ENCODE measurements at regions of chr12 and their contacts with region 1.

Region 1: GRCh38 chr12:106136263-106136662 is 2.5 kb downstream of the NUAK1 start:
- DNase-seq: peak; percentile 26 to 75 (median 54)
- ATAC-seq: peak; percentile 36
- H3K4me3 ChIP-seq: no peak overlapping the region
- H3K4me3 Mint-ChIP-seq: peak overlapping the region in 4 of 10 donors; percentile 1 to 68 (median 7)
- H3K27ac ChIP-seq: no peak overlapping the region
- H3K27ac Mint-ChIP-seq: no peak overlapping the region
- H3K4me1 ChIP-seq: no peaks in the 10 kb centered on the region
- H3K4me1 Mint-ChIP-seq: peaks cover 0 to 24% (median 12%) of the 10 kb centered on the region in 7 donors
- H3K27me3 ChIP-seq: peaks cover 12 to 17% of the 10 kb centered on the region in 2 donors
- H3K27me3 Mint-ChIP-seq: peaks cover 62 to 68% (median 66%) of the 10 kb centered on the region in 5 donors

Region 2: GRCh38 chr12:105420659-105421240 is 715.5 kb before region 1 on chr12:
- CTCF ChIA-PET with region 1: interaction called, 12 read pairs
- POLR2A ChIA-PET with region 1: no interaction called
- intact Hi-C with region 1: loop called (anchors 1 kb)
- DNase-seq: peak in 8 of 9 donors; percentile 8 to 56 (median 44)
- ATAC-seq: peak; percentile 78
- H3K4me3 ChIP-seq: no peak overlapping the region
- H3K4me3 Mint-ChIP-seq: no peak overlapping the region
- H3K27ac ChIP-seq: no peak overlapping the region
- H3K27ac Mint-ChIP-seq: no peak overlapping the region
- H3K4me1 ChIP-seq: no peaks in the 10 kb centered on the region
- H3K4me1 Mint-ChIP-seq: no peaks in the 10 kb centered on the region
- H3K27me3 ChIP-seq: no peaks in the 10 kb centered on the region
- H3K27me3 Mint-ChIP-seq: peaks cover 0 to 6% (median under 1%) of the 10 kb centered on the region in 5 donors

Region 3: DNA sequence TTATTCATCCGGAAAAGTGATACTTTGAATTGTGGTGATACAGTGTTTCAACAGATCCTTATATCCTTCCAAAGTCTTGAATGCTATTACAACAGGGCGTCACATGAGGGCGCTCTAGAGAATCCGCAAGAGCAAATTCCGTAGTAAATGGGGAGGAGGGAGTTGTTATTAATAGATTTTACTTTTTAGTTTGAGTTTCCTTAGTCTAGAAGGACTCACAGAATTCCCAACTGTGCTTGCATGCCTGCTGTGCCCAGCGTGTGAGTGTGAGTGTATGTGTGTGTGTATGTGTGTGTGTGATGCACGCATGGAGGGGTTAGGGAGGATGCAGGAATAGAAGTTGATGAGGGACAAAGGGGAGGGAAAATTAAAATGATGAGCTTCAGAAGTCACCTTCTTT is 430.5 kb before region 1 on chr12:
- CTCF ChIA-PET with region 1: no interaction called
- POLR2A ChIA-PET with region 1: no interaction called
- intact Hi-C with region 1: loop called in 1 of 2 experiments (anchors 5 kb)
- DNase-seq: no peak
- ATAC-seq: no peak
- H3K4me3 ChIP-seq: no peak overlapping the region
- H3K4me3 Mint-ChIP-seq: no peak overlapping the region
- H3K27ac ChIP-seq: no peak overlapping the region
- H3K27ac Mint-ChIP-seq: no peak overlapping the region
- H3K4me1 ChIP-seq: no peaks in the 10 kb centered on the region
- H3K4me1 Mint-ChIP-seq: no peaks in the 10 kb centered on the region
- H3K27me3 ChIP-seq: no peaks in the 10 kb centered on the region
- H3K27me3 Mint-ChIP-seq: peaks cover 0 to 7% (median 3%) of the 10 kb centered on the region in 5 donors

Region 4: GRCh38 chr12:106282457-106283097 is 146.3 kb after region 1 on chr12:
- CTCF ChIA-PET with region 1: no interaction called
- POLR2A ChIA-PET with region 1: no interaction called
- intact Hi-C with region 1: no loop called
- DNase-seq: peak; percentile 15 to 66 (median 48)
- ATAC-seq: peak; percentile 91
- H3K4me3 ChIP-seq: no peak overlapping the region
- H3K4me3 Mint-ChIP-seq: no peak overlapping the region
- H3K27ac ChIP-seq: no peak overlapping the region
- H3K27ac Mint-ChIP-seq: peak overlapping the region in 3 of 9 donors; percentile 3 to 41 (median 37)
- H3K4me1 ChIP-seq: no peaks in the 10 kb centered on the region
- H3K4me1 Mint-ChIP-seq: peaks cover 7 to 18% (median 8%) of the 10 kb centered on the region in 7 donors
- H3K27me3 ChIP-seq: no peaks in the 10 kb centered on the region
- H3K27me3 Mint-ChIP-seq: peaks cover 0 to 18% (median 4%) of the 10 kb centered on the region in 5 donors